A673 (cell line): ENCODE measurements at regions of chr11 and their contacts with region 1.

Region 1: GRCh38 chr11:116641561-116642045 is 131.2 kb downstream of the BUD13 start:
- DNase-seq: peak; percentile 30
- H3K4me3 ChIP-seq: no peak overlapping the region
- H3K27ac ChIP-seq: no peak overlapping the region
- H3K4me1 ChIP-seq: no peaks in the 10 kb centered on the region
- H3K27me3 ChIP-seq: peaks cover 25% of the 10 kb centered on the region
- CTCF ChIP-seq: peak; percentile 83

Region 2: GRCh38 chr11:116454020-116454645 is 187.5 kb before region 1 on chr11:
- CTCF ChIA-PET with region 1: interaction called, 5 read pairs
- POLR2A ChIA-PET with region 1: no interaction called
- intact Hi-C with region 1: loop called (anchors 1 kb)
- DNase-seq: peak; percentile 70
- H3K4me3 ChIP-seq: no peak overlapping the region
- H3K27ac ChIP-seq: no peak overlapping the region
- H3K4me1 ChIP-seq: no peaks in the 10 kb centered on the region
- H3K27me3 ChIP-seq: no peaks in the 10 kb centered on the region
- CTCF ChIP-seq: peak; percentile 74

Region 3: DNA sequence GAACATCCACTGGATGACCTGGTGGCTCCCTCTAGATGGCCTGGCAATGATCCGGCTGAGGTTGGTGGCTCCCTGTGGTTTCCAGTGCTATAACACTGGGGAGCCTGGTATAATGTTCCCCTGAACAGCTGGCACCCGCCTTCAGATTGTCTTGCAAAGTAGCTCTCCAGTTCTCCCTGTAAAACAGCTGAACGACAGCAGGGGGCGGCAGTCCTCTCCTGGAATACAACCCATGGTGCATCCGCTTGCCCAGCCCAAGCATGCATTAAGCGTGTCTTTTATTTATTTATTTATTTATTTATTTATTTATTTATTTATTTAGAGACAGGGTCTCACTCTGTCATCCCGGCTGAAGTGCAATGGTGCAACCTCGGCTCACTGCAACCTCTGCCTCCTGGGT is 127.7 kb before region 1 on chr11:
- CTCF ChIA-PET with region 1: no interaction called
- POLR2A ChIA-PET with region 1: no interaction called
- intact Hi-C with region 1: loop called (anchors 5 kb)
- DNase-seq: peak; percentile 62
- H3K4me3 ChIP-seq: no peak overlapping the region
- H3K27ac ChIP-seq: no peak overlapping the region
- H3K4me1 ChIP-seq: no peaks in the 10 kb centered on the region
- H3K27me3 ChIP-seq: peaks cover 5% of the 10 kb centered on the region
- CTCF ChIP-seq: peak; percentile 43